Heart right ventricle (tissue), 16 donors: ENCODE measurements at regions of chr2 and their contacts with region 1.

Region 1: DNA sequence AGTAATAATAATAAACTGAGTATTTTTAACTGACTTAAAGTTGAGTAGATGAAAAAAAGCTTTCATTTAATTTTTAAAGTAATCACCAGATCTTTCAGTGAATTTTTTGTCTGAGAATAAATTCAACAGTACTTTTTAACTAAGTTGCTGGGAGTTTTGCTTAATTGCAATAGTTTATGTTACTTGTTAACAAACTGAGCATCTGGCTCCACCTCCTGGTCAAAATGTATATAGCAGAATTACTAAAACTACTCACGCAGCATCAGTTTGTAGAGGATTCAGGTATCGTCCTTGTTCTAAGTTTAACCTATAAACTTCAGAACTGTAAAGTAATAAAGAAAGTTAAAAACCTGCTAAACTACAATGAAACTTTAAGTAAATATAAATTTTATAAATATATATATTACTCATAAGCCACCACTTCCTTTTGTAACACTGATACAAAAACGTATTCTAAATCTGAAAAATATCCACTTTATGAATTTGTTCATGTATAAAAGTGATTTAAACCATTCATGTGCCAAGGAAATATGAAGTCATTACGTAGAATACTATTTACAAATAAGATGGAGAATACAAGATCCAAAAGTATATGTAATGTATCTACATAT is 21.3 kb downstream of the NOL10 start:
- DNase-seq: peak in 1 of 2 donors; percentile 25
- ATAC-seq: no peak
- H3K4me3 ChIP-seq: no peak overlapping the region
- H3K27ac ChIP-seq: no peak overlapping the region
- H3K4me1 ChIP-seq: no peaks in the 10 kb centered on the region
- H3K27me3 ChIP-seq: no peaks in the 10 kb centered on the region
- CTCF ChIP-seq: peak; percentile 63 to 84 (median 76)

Region 2: DNA sequence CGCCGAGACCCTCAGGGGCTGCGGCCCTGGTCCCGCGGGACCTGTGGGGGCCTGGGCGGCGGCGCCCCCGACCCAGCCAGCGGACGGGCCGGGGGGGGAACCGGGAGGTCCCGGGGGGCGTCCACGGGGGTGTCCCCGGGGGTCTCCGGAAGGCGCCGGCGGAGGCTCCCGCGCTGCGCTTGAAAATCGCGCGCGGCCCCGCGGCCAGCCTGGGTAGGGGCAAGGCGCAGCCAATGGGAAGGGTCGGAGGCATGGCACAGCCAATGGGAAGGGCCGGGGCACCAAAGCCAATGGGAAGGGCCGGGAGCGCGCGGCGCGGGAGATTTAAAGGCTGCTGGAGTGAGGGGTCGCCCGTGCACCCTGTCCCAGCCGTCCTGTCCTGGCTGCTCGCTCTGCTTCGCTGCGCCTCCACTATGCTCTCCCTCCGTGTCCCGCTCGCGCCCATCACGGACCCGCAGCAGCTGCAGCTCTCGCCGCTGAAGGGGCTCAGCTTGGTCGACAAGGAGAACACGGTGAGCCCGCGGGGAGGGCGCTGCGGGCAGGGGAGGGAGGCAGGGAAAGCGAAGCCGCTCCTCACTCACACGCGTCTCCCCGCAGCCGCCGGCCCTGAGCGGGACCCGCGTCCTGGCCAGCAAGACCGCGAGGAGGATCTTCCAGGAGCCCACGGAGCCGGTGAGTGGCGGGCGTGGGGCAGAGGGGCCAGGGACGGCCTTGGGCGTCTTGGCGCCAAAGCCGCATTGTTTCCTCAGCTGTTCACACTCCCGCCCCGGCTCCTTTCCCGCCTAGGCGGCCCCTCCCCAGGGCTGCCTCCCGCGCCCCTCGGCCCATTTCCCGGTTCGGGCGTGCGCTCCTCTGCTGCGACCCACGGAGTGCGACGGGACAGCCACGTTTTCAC is 545.9 kb before region 1 on chr2 and contains the start of gene RRM2:
- intact Hi-C with region 1: loop called in 8 of 10 experiments (anchors 5 to 10 kb)
- DNase-seq: peak; percentile 92 to 93
- ATAC-seq: peak; percentile 89 to 94 (median 92)
- H3K4me3 ChIP-seq: peak within 1 kb of the TSS; percentile 39 to 77 (median 54)
- H3K27ac ChIP-seq: peak within 1 kb of the TSS in 1 of 10 donors; percentile 77
- H3K4me1 ChIP-seq: peaks cover 14 to 73% (median 29%) of the 10 kb centered on the region in 9 donors
- H3K27me3 ChIP-seq: peaks cover 11 to 27% (median 18%) of the 10 kb centered on the region in 7 donors
- CTCF ChIP-seq: no peak
- total RNA-seq, gene RRM2: 0.08 to 18.7 (median 1.3) TPM

Region 3: GRCh38 chr2:10848541-10848940 is 180.0 kb after region 1 on chr2:
- intact Hi-C with region 1: no loop called
- DNase-seq: no peak
- ATAC-seq: no peak
- H3K4me3 ChIP-seq: no peak overlapping the region
- H3K27ac ChIP-seq: no peak overlapping the region
- H3K4me1 ChIP-seq: peaks cover 0 to 19% (median 5%) of the 10 kb centered on the region in 9 donors
- H3K27me3 ChIP-seq: peaks cover 0 to 6% (median 0%) of the 10 kb centered on the region in 7 donors
- CTCF ChIP-seq: no peak